ENCODE measurements at regions of chr9 and their contacts with region 1.

Region 1: GRCh38 chr9:111298731-111299598 is 31.1 kb downstream of the OR2K2 start:
- DNase-seq: peak in 5 of 10 donors; percentile 23 to 64 (median 44)
- H3K4me3 ChIP-seq: peak overlapping the region in 56 of 59 donors; percentile 1 to 63 (median 38)
- H3K27ac ChIP-seq: peak overlapping the region; percentile 46 to 97 (median 89)
- H3K27me3 ChIP-seq: no peaks in the 10 kb centered on the region
- CTCF ChIP-seq: peak; percentile 79 to 98 (median 90)

Region 2: DNA sequence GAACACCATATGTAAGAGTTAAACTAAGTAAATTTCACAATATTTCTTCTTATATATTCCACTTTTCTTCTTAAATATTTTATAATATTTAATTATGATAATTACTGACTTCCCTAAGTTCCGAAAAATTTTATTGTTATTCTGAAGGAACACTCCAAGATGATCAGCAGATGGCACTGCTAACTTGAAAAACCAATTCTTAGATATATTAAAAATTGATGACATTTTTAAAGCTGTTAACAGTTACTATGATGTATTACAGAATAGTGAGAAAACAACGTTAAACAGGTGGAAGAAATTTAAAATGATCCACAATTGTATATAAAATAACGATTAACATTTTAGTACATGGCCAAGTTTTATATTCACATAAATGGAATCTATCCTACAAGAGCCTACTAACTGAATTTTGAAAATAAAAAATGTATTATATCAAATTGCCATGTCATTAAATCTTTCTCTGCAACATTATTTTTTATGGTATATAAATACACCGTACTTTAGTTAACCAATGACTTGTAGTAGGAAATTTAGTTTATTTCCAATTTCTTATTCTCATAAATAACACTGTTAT is 660.5 kb before region 1 on chr9:
- intact Hi-C with region 1: loop called (anchors 5 kb)
- DNase-seq: no peak
- H3K4me3 ChIP-seq: no peak overlapping the region
- H3K27ac ChIP-seq: peak overlapping the region in 4 of 59 donors; percentile 5 to 37 (median 13)
- H3K27me3 ChIP-seq: no peaks in the 10 kb centered on the region
- CTCF ChIP-seq: peak; percentile 37 to 87 (median 64)

Region 3: DNA sequence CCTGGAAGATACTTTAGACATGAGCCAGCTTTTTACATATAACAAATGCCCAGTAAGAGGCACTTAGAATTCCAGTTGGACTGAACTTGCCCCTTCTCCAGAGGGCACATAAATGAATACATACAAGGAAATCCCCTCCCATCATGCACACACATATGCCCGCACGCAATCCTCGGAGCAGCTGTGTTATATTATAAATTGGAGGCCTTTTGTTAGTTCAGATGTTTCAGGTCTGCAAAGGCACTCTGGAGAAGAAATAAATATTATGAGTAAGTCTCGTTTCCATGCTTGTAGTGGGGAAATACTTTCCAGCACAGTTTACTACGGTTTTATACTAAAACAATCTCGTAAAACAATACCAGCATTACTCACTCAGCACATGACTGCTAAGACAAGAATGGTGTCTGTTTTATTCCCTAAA is 648.0 kb before region 1 on chr9:
- intact Hi-C with region 1: loop called in 1 of 2 experiments (anchors 5 kb)
- DNase-seq: no peak
- H3K4me3 ChIP-seq: peak overlapping the region in 23 of 59 donors; percentile 3 to 51 (median 20)
- H3K27ac ChIP-seq: peak overlapping the region in 58 of 59 donors; percentile 74 to 98 (median 91)
- H3K27me3 ChIP-seq: no peaks in the 10 kb centered on the region
- CTCF ChIP-seq: no peak

Region 4: DNA sequence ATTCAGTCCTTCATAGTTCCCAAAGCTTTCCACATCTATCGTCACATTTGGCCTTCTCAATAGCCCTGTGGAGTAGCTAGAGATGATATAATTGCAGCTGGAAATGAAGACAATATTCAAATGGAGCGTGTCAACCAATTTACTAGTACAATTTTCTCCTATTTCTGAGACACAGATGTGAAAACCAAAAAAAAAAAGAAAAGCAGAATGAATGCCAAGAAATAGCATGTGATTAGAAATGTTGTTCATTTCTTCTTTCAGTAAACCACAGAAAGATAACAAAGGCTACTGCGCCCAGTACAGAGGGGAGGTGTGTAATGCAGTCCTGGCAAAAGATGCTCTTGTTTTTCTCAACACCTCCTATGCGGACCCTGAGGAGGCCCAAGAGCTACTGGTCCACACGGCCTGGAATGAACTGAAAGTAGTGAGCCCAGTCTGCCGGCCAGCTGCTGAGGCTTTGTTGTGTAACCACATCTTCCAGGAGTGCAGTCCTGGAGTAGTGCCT is 531.4 kb before region 1 on chr9:
- intact Hi-C with region 1: loop called in 1 of 2 experiments (anchors 5 kb)
- DNase-seq: peak in 6 of 10 donors; percentile 31 to 54 (median 40)
- H3K4me3 ChIP-seq: peak overlapping the region in 25 of 59 donors; percentile 0 to 45 (median 22)
- H3K27ac ChIP-seq: peak overlapping the region; percentile 28 to 96 (median 89)
- H3K27me3 ChIP-seq: no peaks in the 10 kb centered on the region
- CTCF ChIP-seq: peak in 4 of 56 donors; percentile 3 to 11 (median 8)

Region 5: GRCh38 chr9:110969971-110970386 is 329.0 kb before region 1 on chr9:
- intact Hi-C with region 1: loop called in 1 of 2 experiments (anchors 5 kb)
- DNase-seq: no peak
- H3K4me3 ChIP-seq: no peak overlapping the region
- H3K27ac ChIP-seq: peak overlapping the region in 57 of 59 donors; percentile 9 to 97 (median 88)
- H3K27me3 ChIP-seq: no peaks in the 10 kb centered on the region
- CTCF ChIP-seq: no peak

Region 6: DNA sequence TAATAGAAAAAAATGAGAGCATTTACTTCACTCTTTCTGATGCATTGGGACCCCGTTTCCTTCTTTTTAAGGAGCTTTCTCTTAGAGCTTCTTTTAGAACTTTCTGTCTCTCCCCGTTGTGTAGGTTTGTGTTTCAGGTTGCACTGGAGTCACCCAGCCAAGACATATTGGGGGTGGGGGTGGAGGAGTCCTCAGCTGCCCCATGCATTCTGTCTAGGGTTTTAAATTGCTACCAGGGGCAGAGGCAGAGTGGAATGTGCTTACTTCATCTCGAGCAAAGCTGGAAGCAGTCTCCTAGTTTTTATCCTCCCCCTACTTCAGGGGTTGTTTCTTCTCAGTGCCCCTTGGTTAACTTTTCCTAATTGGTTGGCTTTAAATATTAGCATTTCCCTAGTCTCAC is 21.7 kb after region 1 on chr9:
- intact Hi-C with region 1: no loop called
- DNase-seq: no peak
- H3K4me3 ChIP-seq: no peak overlapping the region
- H3K27ac ChIP-seq: no peak overlapping the region
- H3K27me3 ChIP-seq: peaks cover 0 to 8% (median 0%) of the 10 kb centered on the region in 45 donors
- CTCF ChIP-seq: no peak

Measured in dorsolateral prefrontal cortex (tissue), 120 donors.